ENCODE measurements at regions of chr7 and their contacts with region 1.

Region 1: GRCh38 chr7:81791568-81792518 is 22.0 kb upstream of the HGF start:
- DNase-seq: no peak
- H3K4me3 ChIP-seq: no peak overlapping the region
- H3K27ac ChIP-seq: no peak overlapping the region
- H3K4me1 ChIP-seq: no peaks in the 10 kb centered on the region
- H3K27me3 ChIP-seq: no peaks in the 10 kb centered on the region
- CTCF ChIP-seq: no peak

Region 2: GRCh38 chr7:81594767-81595166 is 197.1 kb before region 1 on chr7:
- CTCF ChIA-PET with region 1: no interaction called
- POLR2A ChIA-PET with region 1: no interaction called
- intact Hi-C with region 1: no loop called
- DNase-seq: no peak
- H3K4me3 ChIP-seq: no peak overlapping the region
- H3K27ac ChIP-seq: no peak overlapping the region
- H3K4me1 ChIP-seq: no peaks in the 10 kb centered on the region
- H3K27me3 ChIP-seq: no peaks in the 10 kb centered on the region
- CTCF ChIP-seq: no peak

Region 3: DNA sequence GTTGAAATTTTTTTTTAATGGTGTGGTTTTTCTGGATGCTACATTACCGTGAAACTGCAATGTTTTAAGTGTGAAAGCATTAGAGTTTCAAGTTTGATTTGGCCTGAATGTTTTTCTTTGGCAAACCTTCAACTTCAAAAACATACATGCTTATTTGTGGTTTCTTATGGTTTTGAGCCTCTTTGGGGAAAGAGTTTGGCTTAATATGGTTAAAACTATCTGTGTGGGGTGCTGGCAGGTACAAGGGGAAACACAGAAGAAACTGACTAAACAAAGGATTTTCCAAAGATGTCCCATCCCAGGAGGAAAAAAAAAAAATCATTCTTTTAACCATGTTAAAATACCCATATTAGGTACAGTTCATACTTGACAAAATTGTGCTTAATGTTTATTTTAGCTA is 143.1 kb before region 1 on chr7:
- CTCF ChIA-PET with region 1: interaction called, 17 read pairs
- POLR2A ChIA-PET with region 1: no interaction called
- intact Hi-C with region 1: no loop called
- DNase-seq: no peak
- H3K4me3 ChIP-seq: no peak overlapping the region
- H3K27ac ChIP-seq: no peak overlapping the region
- H3K4me1 ChIP-seq: no peaks in the 10 kb centered on the region
- H3K27me3 ChIP-seq: no peaks in the 10 kb centered on the region
- CTCF ChIP-seq: no peak

Measured in PC-9 (cell line).